ENCODE measurements at regions of chr19 and their contacts with region 1.

Region 1: GRCh38 chr19:10120538-10121189 is 965 bp upstream of the EIF3G start:
- DNase-seq: no peak
- ATAC-seq: no peak
- H3K4me3 Mint-ChIP-seq: no peak overlapping the region
- H3K27ac Mint-ChIP-seq: no peak overlapping the region
- H3K4me1 Mint-ChIP-seq: peaks cover 14% of the 10 kb centered on the region
- H3K27me3 Mint-ChIP-seq: no peaks in the 10 kb centered on the region
- CTCF ChIP-seq: no peak

Region 2: DNA sequence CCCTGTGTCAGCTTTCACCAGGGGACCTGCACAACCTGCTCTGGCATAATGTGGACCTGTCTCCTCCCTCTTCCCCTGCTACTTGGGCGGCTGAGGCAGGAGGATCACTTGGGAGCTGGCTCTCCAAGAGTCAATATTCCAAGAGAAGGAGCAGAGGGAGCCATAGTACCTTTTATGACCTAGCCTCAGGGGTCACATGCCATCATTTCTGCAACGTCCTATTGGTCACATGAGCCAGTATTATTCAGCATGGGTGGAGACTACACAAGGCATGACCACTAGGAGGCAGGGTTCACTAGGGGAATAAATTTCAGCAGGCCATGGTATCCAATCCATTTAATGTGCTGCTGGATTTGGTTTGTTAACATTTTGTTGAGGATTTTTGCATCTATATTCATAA is 46.5 kb before region 1 on chr19:
- CTCF ChIA-PET with region 1: no interaction called
- POLR2A ChIA-PET with region 1: no interaction called
- intact Hi-C with region 1: no loop called
- DNase-seq: peak; percentile 71
- ATAC-seq: peak; percentile 88
- H3K4me3 Mint-ChIP-seq: no peak overlapping the region
- H3K27ac Mint-ChIP-seq: no peak overlapping the region
- H3K4me1 Mint-ChIP-seq: no peaks in the 10 kb centered on the region
- H3K27me3 Mint-ChIP-seq: peaks cover 3% of the 10 kb centered on the region
- CTCF ChIP-seq: peak; percentile 57

Region 3: DNA sequence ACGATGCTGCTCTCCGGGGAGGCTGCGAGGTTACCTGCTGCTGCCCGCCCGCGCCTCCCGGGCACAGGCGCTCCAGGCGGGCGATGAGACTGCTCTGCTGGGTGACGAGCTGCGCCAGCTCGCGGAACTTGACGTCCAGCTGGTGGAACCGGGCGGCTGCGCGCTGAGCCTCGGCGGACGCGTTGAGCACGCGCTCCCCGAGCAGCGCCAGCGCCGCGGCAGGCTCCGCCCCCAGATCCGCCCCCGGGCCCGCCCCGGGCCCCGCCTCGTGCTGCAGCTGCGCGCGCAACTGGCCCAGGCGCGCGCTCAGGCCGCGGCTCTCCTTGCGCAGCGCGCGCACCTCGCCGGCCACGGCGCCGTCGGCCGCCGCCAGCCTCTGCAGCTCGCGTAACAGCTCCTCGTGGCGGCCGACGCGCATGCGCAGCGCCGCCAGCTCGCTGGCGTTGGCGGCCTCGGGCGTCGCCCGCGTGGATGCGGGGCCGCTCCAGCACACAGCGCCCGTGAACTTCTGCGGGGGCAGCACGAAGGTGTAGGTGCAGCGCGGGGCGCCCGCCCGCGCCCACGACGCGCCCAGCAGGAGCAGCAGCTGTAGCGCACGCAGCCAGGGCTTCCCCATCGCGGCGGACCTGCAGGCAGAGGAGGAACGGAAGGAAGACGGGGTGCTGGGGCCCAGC is 24.6 kb before region 1 on chr19:
- CTCF ChIA-PET with region 1: interaction called, 128 read pairs
- POLR2A ChIA-PET with region 1: interaction called, 521 read pairs
- intact Hi-C with region 1: no loop called
- DNase-seq: peak; percentile 88
- ATAC-seq: peak; percentile 95
- H3K4me3 Mint-ChIP-seq: peak overlapping the region; percentile 60
- H3K27ac Mint-ChIP-seq: peak overlapping the region; percentile 81
- H3K4me1 Mint-ChIP-seq: peaks cover 20% of the 10 kb centered on the region
- H3K27me3 Mint-ChIP-seq: no peaks in the 10 kb centered on the region
- CTCF ChIP-seq: no peak

Measured in activated CD8-positive, alpha-beta T cell treated with anti-CD3 and anti-CD28 coated beads for 36 hours (primary cell).